Ovary (tissue), 10 donors: ENCODE measurements at regions of chrX and their contacts with region 1.

Region 1: GRCh38 chrX:13891377-13892140 is 74.7 kb upstream of the GPM6B start:
- DNase-seq: no peak
- H3K4me3 ChIP-seq: no peak overlapping the region
- H3K27ac ChIP-seq: no peak overlapping the region
- H3K4me1 ChIP-seq: no peaks in the 10 kb centered on the region
- H3K27me3 ChIP-seq: no peaks in the 10 kb centered on the region
- CTCF ChIP-seq: no peak
- EP300 ChIP-seq: no peak
- POLR2A ChIP-seq: no peak

Region 2: GRCh38 chrX:13837290-13837745 is 54.2 kb before region 1 on chrX:
- intact Hi-C with region 1: loop called in 1 of 4 experiments (anchors 2 kb)
- DNase-seq: no peak
- H3K4me3 ChIP-seq: no peak overlapping the region
- H3K27ac ChIP-seq: no peak overlapping the region
- H3K4me1 ChIP-seq: no peaks in the 10 kb centered on the region
- H3K27me3 ChIP-seq: no peaks in the 10 kb centered on the region
- CTCF ChIP-seq: no peak
- EP300 ChIP-seq: no peak
- POLR2A ChIP-seq: no peak